ENCODE measurements at regions of chr10 and their contacts with region 1.

Region 1: GRCh38 chr10:25059764-25060389 is 43.5 kb downstream of the THNSL1 start:
- DNase-seq: peak; percentile 79
- H3K4me3 Mint-ChIP-seq: no peak overlapping the region
- H3K27ac Mint-ChIP-seq: peak overlapping the region; percentile 79
- H3K4me1 Mint-ChIP-seq: peaks cover 44% of the 10 kb centered on the region
- H3K27me3 Mint-ChIP-seq: no peaks in the 10 kb centered on the region
- CTCF ChIP-seq: no peak

Region 2: GRCh38 chr10:24894309-24894708 is 165.6 kb before region 1 on chr10:
- CTCF ChIA-PET with region 1: no interaction called
- intact Hi-C with region 1: no loop called
- DNase-seq: peak; percentile 14
- H3K4me3 Mint-ChIP-seq: no peak overlapping the region
- H3K27ac Mint-ChIP-seq: no peak overlapping the region
- H3K4me1 Mint-ChIP-seq: peaks cover 65% of the 10 kb centered on the region
- H3K27me3 Mint-ChIP-seq: no peaks in the 10 kb centered on the region
- CTCF ChIP-seq: no peak

Region 3: DNA sequence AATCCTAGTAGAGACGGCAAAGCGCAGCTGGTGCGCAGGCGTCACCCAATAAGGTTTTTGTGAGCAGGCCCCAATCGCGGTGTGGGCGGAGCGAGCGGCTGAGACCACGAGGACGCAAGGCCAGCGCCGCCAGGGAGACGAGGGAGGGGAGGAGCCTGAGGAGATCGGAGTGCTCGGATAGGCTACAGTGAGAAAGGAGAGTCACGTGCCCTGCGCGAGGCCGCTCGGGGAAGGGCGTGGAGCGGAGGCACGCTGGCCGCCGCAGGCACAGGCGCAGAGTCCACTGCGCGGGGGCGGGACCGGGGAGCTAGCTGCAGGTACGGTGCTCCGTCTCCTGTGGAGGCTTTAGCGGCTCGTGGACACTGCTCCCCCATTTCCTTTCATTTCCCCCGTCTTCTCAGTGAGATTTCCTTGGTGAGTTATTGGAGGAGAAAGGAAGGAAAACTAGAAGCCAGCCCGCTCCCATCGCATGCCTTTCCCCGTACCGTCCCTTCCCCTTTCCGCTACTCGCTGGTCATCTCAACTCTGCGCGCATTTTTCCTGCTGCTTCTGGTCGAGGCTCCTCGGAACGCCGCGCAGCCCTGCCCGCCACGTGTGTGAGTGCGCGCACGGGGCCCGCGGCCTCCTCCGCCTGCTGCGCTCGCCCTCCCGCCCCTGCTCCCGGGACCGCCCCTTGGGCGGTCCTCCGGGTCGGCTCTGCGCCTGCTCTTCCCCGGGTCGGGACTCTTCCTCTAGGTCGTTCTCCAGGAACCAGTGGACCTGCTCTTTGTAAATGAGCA is 43.3 kb before region 1 on chr10 and contains the start of gene THNSL1:
- CTCF ChIA-PET with region 1: no interaction called
- intact Hi-C with region 1: loop called (anchors 5 kb)
- DNase-seq: peak; percentile 99
- H3K4me3 Mint-ChIP-seq: peak within 1 kb of the TSS; percentile 93
- H3K27ac Mint-ChIP-seq: peak within 1 kb of the TSS; percentile 99
- H3K4me1 Mint-ChIP-seq: peaks cover 16% of the 10 kb centered on the region
- H3K27me3 Mint-ChIP-seq: no peaks in the 10 kb centered on the region
- CTCF ChIP-seq: no peak
- total RNA-seq, gene THNSL1: 6.6 and 7.0 TPM in 2 replicates